HepG2 (cell line): ENCODE measurements at regions of chr2 and their contacts with region 1.

Region 1: GRCh38 chr2:75064691-75065396 is 106.4 kb downstream of the POLE4 start:
- DNase-seq: peak; percentile 32
- ATAC-seq: peak; percentile 85
- H3K4me3 ChIP-seq: no peak overlapping the region
- H3K27ac ChIP-seq: no peak overlapping the region
- H3K4me1 ChIP-seq: peaks cover 28% of the 10 kb centered on the region
- H3K27me3 ChIP-seq: no peaks in the 10 kb centered on the region
- CTCF ChIP-seq: peak; percentile 92
- EP300 ChIP-seq: no peak
- POLR2A ChIP-seq: no peak
- RAD21 ChIP-seq: peak; percentile 78

Region 2: DNA sequence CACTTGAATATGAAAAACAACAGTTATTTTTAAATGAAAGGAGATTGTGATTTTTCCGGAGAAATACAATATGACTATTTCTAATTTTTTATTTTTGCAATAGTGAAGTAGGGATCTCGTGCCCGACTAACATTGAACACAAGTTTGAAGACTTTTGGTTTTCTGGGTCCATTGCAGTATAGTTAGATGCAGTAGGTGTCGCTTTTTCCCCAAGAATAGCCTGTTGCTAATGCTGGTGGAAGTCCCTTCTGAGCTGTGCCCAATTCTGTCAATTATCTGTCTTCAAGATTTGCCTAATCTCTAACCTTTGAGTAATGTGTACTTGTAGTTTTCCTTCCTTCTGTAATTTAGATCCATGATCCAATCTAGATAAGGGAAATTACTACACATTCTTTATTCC is 374.3 kb before region 1 on chr2:
- CTCF ChIA-PET with region 1: no interaction called
- POLR2A ChIA-PET with region 1: no interaction called
- in situ Hi-C with region 1: no loop called
- intact Hi-C with region 1: loop called (anchors 10 kb)
- DNase-seq: peak; percentile 64
- ATAC-seq: peak; percentile 87
- H3K4me3 ChIP-seq: no peak overlapping the region
- H3K27ac ChIP-seq: no peak overlapping the region
- H3K4me1 ChIP-seq: peaks cover 24% of the 10 kb centered on the region; the same call in 1 of the 2 replicates
- H3K27me3 ChIP-seq: 0 out of 5 replicates have a peak, but pooled peaks cover 0 to 3% of the 10 kb centered on the region in 2 experiments
- CTCF ChIP-seq: peak; percentile 92
- EP300 ChIP-seq: no peak; a peak in 1 of 4 replicates
- POLR2A ChIP-seq: no peak
- RAD21 ChIP-seq: peak; percentile 92

Region 3: GRCh38 chr2:74908748-74909444 is 155.9 kb before region 1 on chr2:
- CTCF ChIA-PET with region 1: no interaction called
- POLR2A ChIA-PET with region 1: no interaction called
- in situ Hi-C with region 1: no loop called
- intact Hi-C with region 1: no loop called
- DNase-seq: peak; percentile 24
- ATAC-seq: peak; percentile 81
- H3K4me3 ChIP-seq: peak overlapping the region in 2 of 3 experiments; percentile 0 to 39; a peak in 1 of 6 replicates
- H3K27ac ChIP-seq: no peak overlapping the region
- H3K4me1 ChIP-seq: peaks cover 25% of the 10 kb centered on the region
- H3K27me3 ChIP-seq: peaks cover 0 to 4% of the 10 kb centered on the region in 2 experiments; a peak in 1 of 5 replicates
- CTCF ChIP-seq: no peak
- EP300 ChIP-seq: no peak
- POLR2A ChIP-seq: no peak
- RAD21 ChIP-seq: no peak

Region 4: GRCh38 chr2:75007819-75008218 is 57.0 kb before region 1 on chr2:
- CTCF ChIA-PET with region 1: no interaction called
- POLR2A ChIA-PET with region 1: no interaction called
- in situ Hi-C with region 1: no loop called
- intact Hi-C with region 1: no loop called
- DNase-seq: no peak
- ATAC-seq: no peak
- H3K4me3 ChIP-seq: no peak overlapping the region
- H3K27ac ChIP-seq: no peak overlapping the region
- H3K4me1 ChIP-seq: peaks cover 10% of the 10 kb centered on the region
- H3K27me3 ChIP-seq: no peaks in the 10 kb centered on the region
- CTCF ChIP-seq: peak; percentile 38
- EP300 ChIP-seq: no peak
- POLR2A ChIP-seq: no peak
- RAD21 ChIP-seq: no peak

Region 5: DNA sequence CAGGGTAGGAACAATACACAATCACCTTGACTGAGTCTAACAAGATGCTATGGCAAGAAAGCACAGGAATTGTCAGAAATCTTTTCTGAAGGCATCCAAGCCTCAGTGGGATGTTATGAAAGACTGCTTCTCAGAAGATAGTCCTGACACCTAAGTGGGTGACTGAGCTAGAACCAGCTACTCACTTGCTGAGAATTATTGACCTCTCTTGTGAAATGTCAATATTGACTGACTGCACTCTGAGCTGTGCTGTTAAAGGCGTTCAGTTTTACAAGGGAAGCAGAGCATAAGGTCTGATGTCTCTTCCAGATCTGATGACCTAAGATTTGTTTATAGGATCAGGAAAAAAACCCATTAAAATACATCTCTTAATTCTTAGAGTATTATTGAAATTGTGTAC is 88.4 kb after region 1 on chr2:
- CTCF ChIA-PET with region 1: no interaction called
- POLR2A ChIA-PET with region 1: no interaction called
- in situ Hi-C with region 1: no loop called
- intact Hi-C with region 1: loop called (anchors 5 kb)
- DNase-seq: peak; percentile 89
- ATAC-seq: peak; percentile 99
- H3K4me3 ChIP-seq: no peak overlapping the region; a peak in 1 of 6 replicates
- H3K27ac ChIP-seq: no peak overlapping the region
- H3K4me1 ChIP-seq: peaks cover 39% of the 10 kb centered on the region
- H3K27me3 ChIP-seq: no peaks in the 10 kb centered on the region
- CTCF ChIP-seq: no peak
- EP300 ChIP-seq: peak; percentile 19 to 91; a peak in 2 of 4 replicates
- POLR2A ChIP-seq: no peak
- RAD21 ChIP-seq: peak; percentile 12; the same call in 1 of the 2 replicates

Region 6: DNA sequence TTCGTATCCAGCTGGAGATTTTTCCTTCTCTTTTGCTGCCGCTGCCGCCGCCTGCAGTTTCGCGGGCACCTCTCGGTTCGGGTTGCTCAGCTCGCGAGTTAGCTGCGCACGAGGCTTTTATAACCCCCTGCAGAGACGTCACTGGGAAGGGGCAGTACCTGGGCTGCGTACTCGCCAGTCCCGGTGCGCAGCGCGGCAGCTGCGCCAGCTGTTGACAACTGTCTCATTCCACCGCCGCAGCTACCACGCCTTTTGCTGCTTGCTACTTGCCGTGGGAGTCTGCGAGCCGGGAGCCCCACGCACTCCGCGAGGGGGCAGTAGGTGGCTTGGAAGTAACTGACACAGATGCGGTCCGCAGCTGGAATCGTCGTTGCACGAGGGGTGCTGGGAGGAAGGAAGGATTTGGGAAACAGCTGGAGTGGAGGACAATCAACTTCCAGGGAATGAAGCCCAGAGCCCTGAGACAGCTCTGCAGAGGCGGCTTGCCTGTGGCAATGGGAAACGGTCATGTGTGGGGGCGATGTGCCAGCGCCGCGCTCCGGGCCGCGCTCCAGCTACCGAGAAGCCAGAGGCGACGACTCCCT is 134.7 kb after region 1 on chr2 and contains the start of gene TACR1:
- CTCF ChIA-PET with region 1: no interaction called
- POLR2A ChIA-PET with region 1: no interaction called
- in situ Hi-C with region 1: no loop called
- intact Hi-C with region 1: loop called (anchors 5 kb)
- DNase-seq: peak; percentile 41
- ATAC-seq: peak; percentile 84
- H3K4me3 ChIP-seq: peak within 1 kb of the TSS; percentile 12 to 55 (median 34); a peak in 2 of 6 replicates
- H3K27ac ChIP-seq: no peak within 1 kb of the TSS
- H3K4me1 ChIP-seq: peaks cover 20% of the 10 kb centered on the region
- H3K27me3 ChIP-seq: peaks cover 14 to 55% of the 10 kb centered on the region in 2 experiments; a peak in 4 of 5 replicates
- CTCF ChIP-seq: peak; percentile 84
- EP300 ChIP-seq: no peak
- POLR2A ChIP-seq: no peak
- RAD21 ChIP-seq: peak; percentile 60; the same call in 1 of the 2 replicates
- total RNA-seq, gene TACR1: not detected in 2 replicates

Region 7: GRCh38 chr2:75241696-75242095 is 176.9 kb after region 1 on chr2:
- CTCF ChIA-PET with region 1: interaction called, 5 read pairs
- POLR2A ChIA-PET with region 1: no interaction called
- in situ Hi-C with region 1: no loop called
- intact Hi-C with region 1: loop called (anchors 2 kb)
- DNase-seq: peak; percentile 25
- ATAC-seq: peak; percentile 66
- H3K4me3 ChIP-seq: no peak overlapping the region
- H3K27ac ChIP-seq: no peak overlapping the region
- H3K4me1 ChIP-seq: no peaks in the 10 kb centered on the region
- H3K27me3 ChIP-seq: no peaks in the 10 kb centered on the region; a peak in 1 of 5 replicates
- CTCF ChIP-seq: peak; percentile 65
- EP300 ChIP-seq: no peak
- POLR2A ChIP-seq: no peak
- RAD21 ChIP-seq: peak; percentile 67; the same call in 1 of the 2 replicates

Region 8: DNA sequence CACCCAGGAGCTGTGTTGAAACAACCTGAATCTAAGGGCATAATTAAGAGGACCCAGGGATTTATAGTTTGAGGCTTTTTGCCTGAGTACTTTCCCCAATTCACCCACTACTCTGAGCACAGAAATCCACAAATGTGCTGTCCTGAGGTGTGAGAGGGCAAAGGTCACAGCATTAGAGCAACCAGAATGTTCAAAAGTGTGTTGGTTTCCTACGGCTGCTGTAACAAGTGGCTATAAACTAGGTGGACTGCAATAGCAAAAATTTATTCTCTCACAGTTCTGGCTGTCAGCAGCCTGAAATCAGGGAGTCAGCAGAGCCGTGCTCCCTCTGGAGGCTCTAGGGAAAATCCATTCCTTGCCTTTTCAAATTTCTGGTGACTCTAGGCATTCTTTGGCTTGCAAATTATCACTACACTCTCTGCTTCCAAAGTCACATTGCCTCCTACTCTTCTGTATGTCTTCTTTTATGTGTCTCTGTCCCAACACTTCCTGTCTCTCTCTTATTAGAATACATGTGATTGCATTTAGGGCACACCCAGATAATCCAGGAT is 225.8 kb after region 1 on chr2:
- CTCF ChIA-PET with region 1: no interaction called
- POLR2A ChIA-PET with region 1: no interaction called
- in situ Hi-C with region 1: no loop called
- intact Hi-C with region 1: loop called (anchors 2 kb)
- DNase-seq: no peak
- ATAC-seq: peak; percentile 80
- H3K4me3 ChIP-seq: no peak overlapping the region
- H3K27ac ChIP-seq: no peak overlapping the region
- H3K4me1 ChIP-seq: 0 out of 2 replicates have a peak, but pooled peaks cover 4% of the 10 kb centered on the region
- H3K27me3 ChIP-seq: peaks cover 0 to 14% of the 10 kb centered on the region in 2 experiments; a peak in 1 of 5 replicates
- CTCF ChIP-seq: peak; percentile 51
- EP300 ChIP-seq: no peak
- POLR2A ChIP-seq: no peak
- RAD21 ChIP-seq: 0 out of 2 replicates have a peak, but pooled peaks have one; percentile 20

Region 9: DNA sequence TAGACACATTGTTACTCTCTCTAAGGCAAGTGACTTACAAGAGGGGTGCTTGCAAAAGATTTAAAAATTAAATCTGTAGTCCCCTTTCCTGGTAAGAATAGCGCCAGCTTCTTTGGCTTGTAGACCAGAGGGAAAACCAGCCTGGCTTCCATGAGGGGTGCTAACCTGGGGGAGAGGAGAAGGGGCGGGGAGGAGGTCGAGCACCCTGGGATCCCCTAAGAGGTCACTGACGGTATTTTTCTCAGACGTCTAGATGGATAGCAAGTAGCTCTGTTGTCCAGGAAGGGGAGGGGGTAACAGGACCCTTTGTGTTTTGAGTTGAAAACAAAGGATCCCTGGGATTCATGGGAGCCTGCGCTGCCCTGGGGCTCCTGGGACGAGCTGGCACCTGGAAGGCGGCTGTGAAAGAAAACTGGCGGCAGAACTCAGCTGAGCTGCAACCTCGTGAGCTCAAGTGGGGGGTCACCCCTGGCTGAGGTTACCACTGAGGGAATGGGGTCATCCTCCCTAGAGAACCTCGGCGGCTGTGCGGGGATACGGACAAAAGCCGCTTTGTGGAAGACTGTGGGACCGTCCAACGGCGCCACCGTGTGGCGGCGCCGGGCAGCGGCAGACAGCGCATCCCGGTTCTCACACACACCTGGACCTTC is 544.0 kb after region 1 on chr2:
- CTCF ChIA-PET with region 1: no interaction called
- POLR2A ChIA-PET with region 1: no interaction called
- in situ Hi-C with region 1: loop called (anchors 25 kb)
- intact Hi-C with region 1: no loop called
- DNase-seq: peak; percentile 79
- ATAC-seq: peak; percentile 95
- H3K4me3 ChIP-seq: peak overlapping the region; percentile 28 to 65 (median 28); a peak in 5 of 6 replicates
- H3K27ac ChIP-seq: peak overlapping the region; percentile 8
- H3K4me1 ChIP-seq: peaks cover 66% of the 10 kb centered on the region
- H3K27me3 ChIP-seq: no peaks in the 10 kb centered on the region; a peak in 1 of 5 replicates
- CTCF ChIP-seq: peak; percentile 99
- EP300 ChIP-seq: peak in 1 of 2 experiments; percentile 33; a peak in 1 of 4 replicates
- POLR2A ChIP-seq: no peak
- RAD21 ChIP-seq: peak; percentile 99